GM18951 (cell line): ENCODE measurements at regions of chr5 and their contacts with region 1.

Region 1: GRCh38 chr5:17189381-17190036 is 27.9 kb upstream of the BASP1 start:
- POLR2A ChIP-seq: no peak

Region 2: GRCh38 chr5:16411741-16412455 is 777.6 kb before region 1 on chr5:
- in situ Hi-C with region 1: no loop called
- POLR2A ChIP-seq: no peak

Region 3: GRCh38 chr5:16791036-16791705 is 398.3 kb before region 1 on chr5:
- in situ Hi-C with region 1: loop called (anchors 25 kb)
- POLR2A ChIP-seq: no peak